Heart left ventricle (tissue), 16 donors: ENCODE measurements at regions of chr6 and their contacts with region 1.

Region 1: DNA sequence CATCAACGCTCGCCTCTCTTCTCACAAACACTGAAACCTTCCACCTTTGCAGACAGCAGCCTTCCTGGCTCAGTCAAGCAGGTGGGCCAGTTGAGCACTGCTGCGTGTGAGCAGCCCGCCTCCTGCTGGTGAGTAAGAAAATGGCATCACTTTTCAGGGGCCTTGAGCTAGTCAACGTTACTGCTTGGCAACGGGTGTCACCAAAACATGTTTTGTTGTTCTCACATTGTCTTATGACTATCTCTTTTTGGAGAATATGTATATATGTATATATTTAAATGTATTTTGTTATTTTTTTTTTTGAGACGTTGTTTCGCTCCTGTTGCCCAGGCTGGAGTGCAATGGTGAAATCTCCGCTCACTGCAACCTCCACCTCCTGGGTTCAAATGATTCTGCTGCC is 97.0 kb upstream of the AGPAT4 start:
- DNase-seq: peak in 4 of 5 donors; percentile 43 to 59 (median 49)
- ATAC-seq: peak; percentile 47 to 73 (median 56)
- H3K4me3 ChIP-seq: no peak overlapping the region
- H3K27ac ChIP-seq: no peak overlapping the region
- H3K4me1 ChIP-seq: peaks cover 0 to 12% (median 0%) of the 10 kb centered on the region in 12 donors
- H3K27me3 ChIP-seq: no peaks in the 10 kb centered on the region
- CTCF ChIP-seq: peak; percentile 77 to 92 (median 90)
- POLR2A ChIP-seq: no peak

Region 2: GRCh38 chr6:160733050-160733646 is 637.7 kb before region 1 on chr6:
- intact Hi-C with region 1: loop called (anchors 2 to 10 kb)
- DNase-seq: peak in 4 of 5 donors; percentile 12 to 35 (median 31)
- ATAC-seq: peak; percentile 37 to 81 (median 58)
- H3K4me3 ChIP-seq: no peak overlapping the region
- H3K27ac ChIP-seq: no peak overlapping the region
- H3K4me1 ChIP-seq: no peaks in the 10 kb centered on the region
- H3K27me3 ChIP-seq: no peaks in the 10 kb centered on the region
- CTCF ChIP-seq: peak; percentile 42 to 77 (median 60)
- POLR2A ChIP-seq: no peak

Region 3: DNA sequence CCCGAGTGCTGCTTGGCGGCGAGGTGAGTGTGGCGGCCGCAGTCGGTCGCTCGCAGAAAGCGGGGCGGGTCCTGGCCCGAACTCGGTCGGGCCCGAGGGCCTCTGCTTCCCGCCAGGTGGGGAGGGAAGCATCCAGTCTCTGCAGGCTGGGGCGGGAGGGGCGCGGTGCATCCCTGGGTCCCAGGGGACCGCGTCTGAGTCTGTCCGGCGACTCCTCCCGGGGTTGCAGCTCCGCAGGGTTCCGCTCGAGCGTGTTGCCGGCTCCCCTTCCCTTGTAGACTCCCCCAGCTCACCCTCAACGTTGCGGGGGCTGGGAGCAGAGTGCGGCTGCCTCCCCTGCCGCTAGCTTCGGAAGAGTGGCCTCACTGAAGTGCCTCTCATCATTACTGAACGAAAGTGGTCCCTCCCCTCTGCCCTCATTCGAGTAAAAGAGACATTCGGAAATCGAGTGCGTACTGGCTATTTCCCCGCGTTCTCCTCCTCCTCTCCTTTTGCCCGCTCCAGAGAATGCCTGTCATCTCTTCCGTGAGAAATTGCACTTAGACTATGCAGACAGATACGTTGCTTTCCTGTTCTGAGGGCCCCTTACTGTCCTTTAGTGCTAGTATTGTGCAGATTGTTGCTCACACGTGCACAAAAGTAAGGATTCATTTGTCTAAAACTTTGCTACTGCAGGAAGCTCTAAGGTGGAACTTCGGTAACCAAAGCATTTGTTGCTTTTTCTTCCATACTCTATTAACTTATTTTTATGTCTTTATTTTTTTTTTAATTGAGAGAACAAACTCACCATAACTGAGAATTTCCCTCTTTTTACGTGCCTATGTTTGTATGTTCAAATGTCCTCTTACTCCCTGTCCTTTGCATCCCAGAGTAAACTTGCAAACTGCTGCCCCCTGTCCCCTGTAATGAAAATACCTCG is 378.6 kb before region 1 on chr6:
- intact Hi-C with region 1: loop called in 1 of 10 experiments (anchors 2 kb)
- DNase-seq: peak; percentile 48 to 78 (median 50)
- ATAC-seq: peak in 3 of 4 donors; percentile 64 to 69 (median 66)
- H3K4me3 ChIP-seq: peak overlapping the region; percentile 79 to 98 (median 91)
- H3K27ac ChIP-seq: peak overlapping the region; percentile 93 to 99 (median 96)
- H3K4me1 ChIP-seq: peaks cover 0 to 38% (median 19%) of the 10 kb centered on the region in 12 donors
- H3K27me3 ChIP-seq: no peaks in the 10 kb centered on the region
- CTCF ChIP-seq: peak; percentile 31 to 75 (median 56)
- POLR2A ChIP-seq: no peak

Region 4: DNA sequence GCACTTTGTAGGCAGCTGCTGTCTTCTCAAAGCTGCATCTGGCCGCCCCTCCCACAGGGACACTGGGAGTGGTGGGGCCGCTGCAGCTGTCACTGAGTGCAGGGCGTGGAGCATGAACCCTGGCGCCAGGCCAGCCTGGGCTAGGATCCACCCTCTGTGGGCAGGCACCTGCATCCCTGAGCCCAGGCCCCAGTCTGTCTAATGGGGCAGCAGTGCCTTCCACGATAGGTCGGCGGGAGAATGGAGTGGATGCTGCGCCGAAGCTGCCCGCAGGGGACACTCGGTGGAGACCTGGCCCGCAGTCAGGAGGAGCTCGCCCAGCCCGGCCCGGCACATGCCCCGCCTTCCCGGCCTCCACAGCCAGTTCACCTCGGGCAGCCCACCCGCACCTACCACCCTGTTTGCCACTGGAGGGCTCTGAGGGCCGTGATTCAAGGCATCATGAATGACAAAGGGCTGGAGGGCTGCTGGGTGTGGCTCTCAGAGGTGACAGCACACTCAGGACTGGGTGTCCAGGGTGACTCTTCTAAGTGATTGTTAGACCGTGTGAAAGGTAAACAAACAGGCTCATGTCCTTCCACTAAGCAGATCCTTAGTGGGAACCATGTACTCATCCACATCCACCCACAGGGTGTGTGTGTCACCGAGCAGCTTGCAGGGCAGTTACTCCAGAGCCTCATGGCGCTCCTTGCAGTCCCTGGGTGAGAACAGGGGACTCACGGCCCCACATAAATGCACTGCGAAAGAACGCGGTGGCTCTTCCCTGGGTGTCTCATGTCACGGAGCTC is 230.9 kb before region 1 on chr6:
- intact Hi-C with region 1: loop called in 1 of 10 experiments (anchors 10 kb)
- DNase-seq: peak in 1 of 5 donors; percentile 56
- ATAC-seq: peak in 3 of 4 donors; percentile 38 to 55 (median 40)
- H3K4me3 ChIP-seq: no peak overlapping the region
- H3K27ac ChIP-seq: no peak overlapping the region
- H3K4me1 ChIP-seq: peaks cover 0 to 10% (median 0%) of the 10 kb centered on the region in 12 donors
- H3K27me3 ChIP-seq: no peaks in the 10 kb centered on the region
- CTCF ChIP-seq: no peak
- POLR2A ChIP-seq: no peak

Region 5: DNA sequence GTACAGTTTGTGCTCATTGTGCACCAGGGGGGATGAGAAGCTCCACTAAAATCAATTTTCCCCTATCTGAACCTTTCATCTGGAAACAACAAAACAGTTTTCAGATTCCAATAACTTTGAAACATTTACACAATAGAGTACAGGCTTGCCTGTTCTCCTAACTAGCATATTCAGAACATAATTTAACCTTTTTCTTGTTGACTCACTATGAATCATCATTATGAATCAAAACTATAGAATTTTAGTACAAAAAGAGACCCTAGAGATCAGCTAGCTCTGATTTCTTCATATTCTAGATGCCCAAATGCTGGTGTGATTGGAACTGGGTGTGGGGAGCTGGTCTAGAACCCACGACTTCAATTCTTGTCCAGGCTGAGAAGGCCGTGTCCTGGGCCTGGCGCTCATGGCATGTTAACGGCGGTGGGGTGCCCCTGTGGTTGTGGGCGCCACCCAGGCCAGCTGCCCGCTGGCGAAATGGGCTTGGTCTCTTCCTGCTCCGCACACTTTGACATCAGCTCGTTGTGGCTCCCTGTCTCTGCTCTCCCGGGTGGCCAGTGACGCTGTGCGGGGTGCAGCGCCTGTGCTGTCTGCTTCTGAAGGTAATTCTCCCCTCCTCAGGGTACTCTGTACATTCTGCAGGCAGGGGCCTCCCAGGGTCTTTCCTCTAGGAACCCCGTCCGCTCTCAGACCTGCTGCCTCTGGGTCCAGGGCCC is 67.1 kb before region 1 on chr6:
- intact Hi-C with region 1: no loop called
- DNase-seq: no peak
- ATAC-seq: no peak
- H3K4me3 ChIP-seq: no peak overlapping the region
- H3K27ac ChIP-seq: no peak overlapping the region
- H3K4me1 ChIP-seq: peaks cover 0 to 6% (median 0%) of the 10 kb centered on the region in 12 donors
- H3K27me3 ChIP-seq: no peaks in the 10 kb centered on the region
- CTCF ChIP-seq: no peak
- POLR2A ChIP-seq: no peak

Region 6: DNA sequence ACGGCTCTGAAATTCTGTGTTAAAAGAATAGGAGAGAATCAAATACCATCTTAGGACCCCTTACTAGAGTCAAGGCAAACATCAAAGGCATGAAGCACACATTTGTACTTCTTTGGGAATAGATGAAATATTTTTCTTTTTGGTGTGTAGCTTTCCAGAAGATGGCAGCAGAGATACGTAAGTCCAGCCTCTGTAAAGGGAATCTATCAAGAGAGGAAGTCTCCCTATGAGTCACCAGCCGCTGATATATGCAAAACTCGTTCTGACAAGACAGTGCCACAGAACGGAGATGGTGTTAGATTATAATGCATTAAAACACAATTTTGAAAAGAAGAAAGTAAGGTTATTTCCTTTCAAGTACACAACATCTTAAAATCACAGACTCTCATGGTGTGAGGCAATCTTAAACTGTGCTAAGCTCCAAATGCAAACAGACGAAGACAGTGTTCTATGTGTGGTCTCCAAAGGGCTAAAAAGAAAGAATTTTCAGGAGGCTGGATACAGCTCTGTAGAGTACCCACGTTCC is 23.0 kb after region 1 on chr6:
- intact Hi-C with region 1: no loop called
- DNase-seq: peak in 2 of 5 donors; percentile 47 to 51
- ATAC-seq: peak; percentile 68 to 89 (median 85)
- H3K4me3 ChIP-seq: no peak overlapping the region
- H3K27ac ChIP-seq: no peak overlapping the region
- H3K4me1 ChIP-seq: peaks cover 0 to 6% (median 1%) of the 10 kb centered on the region in 12 donors
- H3K27me3 ChIP-seq: no peaks in the 10 kb centered on the region
- CTCF ChIP-seq: peak; percentile 40 to 74 (median 62)
- POLR2A ChIP-seq: no peak